Endothelial cell of umbilical vein (primary cell): ENCODE measurements at regions of chr16 and their contacts with region 1.

Region 1: GRCh38 chr16:22898874-22899348 is 84.9 kb downstream of the HS3ST2 start:
- DNase-seq: peak; percentile 74
- H3K4me3 ChIP-seq: no peak overlapping the region
- H3K27ac ChIP-seq: no peak overlapping the region
- H3K4me1 ChIP-seq: peaks cover 6% of the 10 kb centered on the region
- H3K27me3 ChIP-seq: peaks cover 0 to 2% of the 10 kb centered on the region in 2 experiments
- CTCF ChIP-seq: peak; percentile 84 to 91
- POLR2A ChIP-seq: no peak

Region 2: GRCh38 chr16:22882981-22883380 is 15.9 kb before region 1 on chr16:
- CTCF ChIA-PET with region 1: interaction called, 11 read pairs
- POLR2A ChIA-PET with region 1: no interaction called
- dilution Hi-C with region 1: no loop called
- intact Hi-C with region 1: no loop called
- DNase-seq: no peak
- H3K4me3 ChIP-seq: no peak overlapping the region
- H3K27ac ChIP-seq: no peak overlapping the region
- H3K4me1 ChIP-seq: no peaks in the 10 kb centered on the region
- H3K27me3 ChIP-seq: no peaks in the 10 kb centered on the region
- CTCF ChIP-seq: no peak
- POLR2A ChIP-seq: no peak

Region 3: DNA sequence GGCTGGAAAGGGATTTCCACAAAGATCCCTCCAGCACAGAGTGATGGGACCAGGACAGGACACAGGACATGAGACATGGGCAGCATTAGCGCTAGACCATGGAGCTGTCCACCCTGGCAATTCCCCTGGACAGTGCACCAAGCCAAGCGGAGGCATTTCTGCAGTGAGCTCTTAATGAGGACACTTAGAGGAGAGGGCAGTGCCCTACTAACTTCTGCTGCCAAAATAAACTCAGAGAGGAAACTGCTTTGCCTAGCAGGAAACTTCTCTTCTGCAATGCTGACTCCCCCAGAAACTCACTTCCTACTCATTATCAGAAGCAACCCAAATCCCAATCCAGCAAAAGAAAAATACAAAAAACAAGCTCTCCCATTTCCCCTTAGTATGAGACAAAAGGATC is 34.3 kb after region 1 on chr16:
- CTCF ChIA-PET with region 1: interaction called, 21 read pairs
- POLR2A ChIA-PET with region 1: no interaction called
- dilution Hi-C with region 1: no loop called
- intact Hi-C with region 1: loop called (anchors 5 kb)
- DNase-seq: peak; percentile 57
- H3K4me3 ChIP-seq: no peak overlapping the region
- H3K27ac ChIP-seq: no peak overlapping the region
- H3K4me1 ChIP-seq: peaks cover 9% of the 10 kb centered on the region
- H3K27me3 ChIP-seq: peaks cover 0 to 4% of the 10 kb centered on the region in 2 experiments
- CTCF ChIP-seq: no peak
- POLR2A ChIP-seq: no peak

Region 4: GRCh38 chr16:22948603-22949368 is 49.9 kb after region 1 on chr16:
- CTCF ChIA-PET with region 1: interaction called, 39 read pairs
- POLR2A ChIA-PET with region 1: no interaction called
- dilution Hi-C with region 1: no loop called
- intact Hi-C with region 1: loop called (anchors 1 kb)
- DNase-seq: peak; percentile 69
- H3K4me3 ChIP-seq: no peak overlapping the region
- H3K27ac ChIP-seq: no peak overlapping the region
- H3K4me1 ChIP-seq: no peaks in the 10 kb centered on the region
- H3K27me3 ChIP-seq: peaks cover 0 to 2% of the 10 kb centered on the region in 2 experiments
- CTCF ChIP-seq: peak; percentile 72 to 80
- POLR2A ChIP-seq: no peak

Region 5: DNA sequence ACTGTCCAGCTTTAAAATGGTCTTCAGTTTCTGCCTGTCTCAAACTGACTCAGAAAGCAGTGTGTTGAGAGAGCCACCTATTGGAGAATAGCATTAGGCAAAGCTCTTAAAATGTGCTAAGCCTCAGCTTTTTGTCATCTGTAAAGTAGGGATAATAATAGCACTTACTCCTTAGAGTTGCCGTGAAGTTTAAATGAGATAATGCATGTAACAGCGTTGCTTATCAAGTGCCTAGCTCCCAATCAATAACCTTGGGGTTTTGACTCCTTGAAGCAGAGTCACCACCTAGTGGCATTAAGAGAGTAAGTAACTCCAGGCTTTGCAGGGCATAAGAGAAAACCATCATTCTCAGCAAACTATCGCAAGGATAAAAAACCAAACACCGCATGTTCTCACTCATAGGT is 78.4 kb after region 1 on chr16:
- CTCF ChIA-PET with region 1: interaction called, 13 read pairs
- POLR2A ChIA-PET with region 1: no interaction called
- dilution Hi-C with region 1: no loop called
- intact Hi-C with region 1: loop called (anchors 2 kb)
- DNase-seq: peak; percentile 3
- H3K4me3 ChIP-seq: no peak overlapping the region
- H3K27ac ChIP-seq: no peak overlapping the region
- H3K4me1 ChIP-seq: no peaks in the 10 kb centered on the region
- H3K27me3 ChIP-seq: no peaks in the 10 kb centered on the region
- CTCF ChIP-seq: no peak
- POLR2A ChIP-seq: no peak

Region 6: GRCh38 chr16:23060458-23061320 is 161.8 kb after region 1 on chr16:
- CTCF ChIA-PET with region 1: interaction called, 10 read pairs
- POLR2A ChIA-PET with region 1: no interaction called
- dilution Hi-C with region 1: no loop called
- intact Hi-C with region 1: loop called (anchors 1 kb)
- DNase-seq: peak; percentile 78
- H3K4me3 ChIP-seq: no peak overlapping the region
- H3K27ac ChIP-seq: no peak overlapping the region
- H3K4me1 ChIP-seq: no peaks in the 10 kb centered on the region
- H3K27me3 ChIP-seq: no peaks in the 10 kb centered on the region
- CTCF ChIP-seq: peak; percentile 70 to 74
- POLR2A ChIP-seq: no peak

Region 7: GRCh38 chr16:23124315-23124714 is 225.4 kb after region 1 on chr16:
- CTCF ChIA-PET with region 1: no interaction called
- POLR2A ChIA-PET with region 1: no interaction called
- dilution Hi-C with region 1: no loop called
- intact Hi-C with region 1: no loop called
- DNase-seq: peak; percentile 85
- H3K4me3 ChIP-seq: no peak overlapping the region
- H3K27ac ChIP-seq: peak overlapping the region; percentile 27
- H3K4me1 ChIP-seq: peaks cover 18% of the 10 kb centered on the region
- H3K27me3 ChIP-seq: no peaks in the 10 kb centered on the region
- CTCF ChIP-seq: no peak
- POLR2A ChIP-seq: no peak

Region 8: DNA sequence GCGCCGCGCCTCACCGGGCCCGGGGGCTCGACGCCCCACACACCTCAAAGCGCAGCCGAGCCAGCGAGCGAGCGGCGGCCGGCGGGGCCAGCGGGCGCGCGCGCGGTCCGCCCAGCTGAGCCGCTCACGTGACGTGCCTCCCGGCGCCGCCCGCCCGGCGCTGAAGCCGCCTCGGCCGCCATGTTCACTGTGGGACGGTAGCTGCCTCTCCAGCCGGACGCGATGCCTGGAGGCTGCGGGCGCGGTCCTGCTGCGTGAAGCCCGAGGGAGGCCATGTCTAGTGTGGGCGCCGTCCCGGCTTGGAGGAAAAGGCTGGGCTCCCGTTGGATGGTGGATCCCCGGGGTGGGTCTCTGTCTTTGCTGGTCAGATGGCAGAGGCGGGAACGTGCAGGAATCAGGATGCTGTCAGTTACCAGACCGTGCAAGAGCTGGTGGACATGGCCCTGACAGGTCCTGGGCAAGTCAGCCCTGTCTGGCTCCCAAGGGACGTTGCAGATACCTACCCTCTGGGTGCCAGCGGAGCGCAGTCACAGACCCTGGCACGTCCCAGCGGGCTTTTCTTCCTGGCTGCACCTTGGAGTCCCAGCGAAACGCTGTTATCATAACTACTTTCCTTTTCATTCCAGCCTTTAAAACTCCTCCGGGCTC is 250.6 kb after region 1 on chr16 and contains the start of gene USP31:
- CTCF ChIA-PET with region 1: interaction called, 10 read pairs
- POLR2A ChIA-PET with region 1: no interaction called
- dilution Hi-C with region 1: no loop called
- intact Hi-C with region 1: loop called (anchors 2 kb)
- DNase-seq: peak; percentile 96
- H3K4me3 ChIP-seq: peak within 1 kb of the TSS; percentile 75 to 91 (median 84)
- H3K27ac ChIP-seq: peak within 1 kb of the TSS; percentile 51
- H3K4me1 ChIP-seq: peaks cover 21% of the 10 kb centered on the region
- H3K27me3 ChIP-seq: no peaks in the 10 kb centered on the region
- CTCF ChIP-seq: no peak
- POLR2A ChIP-seq: no peak
- total RNA-seq, gene USP31: 37.4 and 42.4 TPM in 2 replicates